ENCODE measurements at regions of chr5 and their contacts with region 1.

Region 1: DNA sequence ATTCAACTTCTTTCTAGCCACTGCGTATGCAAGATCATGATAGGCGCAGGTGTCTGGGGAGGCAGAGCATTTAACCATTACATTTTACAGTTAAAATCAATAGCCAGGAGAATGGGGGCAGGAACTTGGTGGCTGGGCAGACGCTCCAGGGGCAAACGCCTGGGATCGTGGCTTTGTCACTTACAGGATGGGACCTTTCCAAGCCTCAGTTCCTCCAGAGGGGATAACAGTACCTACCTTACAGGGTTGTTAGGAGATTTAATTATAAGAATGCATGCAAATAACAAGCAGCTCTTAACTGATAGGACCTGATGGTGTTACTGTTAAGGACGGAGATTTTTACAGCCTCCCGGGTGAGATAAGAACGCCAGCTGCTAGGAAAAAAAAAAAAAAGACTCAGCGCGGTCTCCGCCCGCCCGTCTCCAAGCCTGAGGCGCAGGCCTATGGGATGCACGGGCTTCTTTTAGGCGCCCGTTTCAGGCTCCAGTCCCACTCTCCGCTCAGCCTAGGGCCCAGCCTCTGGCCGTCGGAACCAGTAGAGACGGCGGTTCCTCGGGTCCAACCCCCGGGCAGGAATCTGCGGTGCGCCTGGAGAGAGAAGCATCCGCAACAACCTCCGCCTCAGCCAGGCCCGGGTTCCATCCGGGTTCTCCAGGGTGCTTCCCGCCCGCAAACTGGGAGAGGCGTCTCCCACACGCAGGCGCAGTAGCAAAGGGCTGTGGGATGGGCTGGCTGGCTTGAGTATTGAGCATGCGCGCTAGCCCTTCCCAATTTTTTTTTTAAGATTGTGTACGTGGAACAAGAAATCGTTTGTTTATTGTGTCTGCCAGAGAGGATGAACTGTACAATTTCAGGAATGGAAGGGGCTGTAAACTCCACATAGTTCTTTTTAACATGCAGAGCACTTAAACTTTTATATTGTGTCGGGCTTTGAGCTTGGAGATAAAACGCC is at the start of gene FAM200C:
- DNase-seq: peak; percentile 74
- H3K4me3 Mint-ChIP-seq: peak within 1 kb of the TSS; percentile 87
- H3K27ac Mint-ChIP-seq: peak within 1 kb of the TSS; percentile 84
- H3K4me1 Mint-ChIP-seq: peaks cover 18% of the 10 kb centered on the region
- H3K27me3 Mint-ChIP-seq: no peaks in the 10 kb centered on the region
- total RNA-seq, gene FAM200C: 0.65 and 0.98 TPM in 2 replicates

Region 2: GRCh38 chr5:160119142-160119904 is 280.4 kb before region 1 on chr5 and contains the start of gene PWWP2A:
- intact Hi-C with region 1: loop called (anchors 2 kb)
- DNase-seq: peak; percentile 96
- H3K4me3 Mint-ChIP-seq: peak within 1 kb of the TSS; percentile 95
- H3K27ac Mint-ChIP-seq: peak within 1 kb of the TSS; percentile 96
- H3K4me1 Mint-ChIP-seq: peaks cover 15% of the 10 kb centered on the region
- H3K27me3 Mint-ChIP-seq: peaks cover 4% of the 10 kb centered on the region
- total RNA-seq, gene PWWP2A: 29.7 and 30.2 TPM in 2 replicates

Region 3: DNA sequence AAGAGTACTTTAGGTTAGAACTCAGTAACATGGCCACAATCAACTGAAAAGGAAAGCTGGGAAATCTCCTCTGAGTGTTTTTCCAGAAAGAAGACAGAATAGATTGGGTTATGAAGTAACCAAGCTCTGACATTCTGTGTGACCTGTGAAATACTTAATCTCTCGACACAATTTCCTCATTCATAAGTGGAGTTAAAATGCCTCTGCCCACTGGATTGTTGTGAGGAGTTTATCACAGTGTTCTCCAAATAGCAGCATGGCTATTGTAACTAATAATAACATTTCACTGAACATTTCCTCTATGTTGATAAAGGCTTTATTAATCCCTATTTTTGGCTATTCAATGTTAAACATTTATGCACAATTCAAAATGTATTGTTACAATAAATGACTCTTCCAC is 835.9 kb after region 1 on chr5:
- intact Hi-C with region 1: no loop called
- DNase-seq: no peak
- H3K4me3 Mint-ChIP-seq: no peak overlapping the region
- H3K27ac Mint-ChIP-seq: no peak overlapping the region
- H3K4me1 Mint-ChIP-seq: no peaks in the 10 kb centered on the region
- H3K27me3 Mint-ChIP-seq: no peaks in the 10 kb centered on the region

Measured in activated T-helper 1 cell treated with anti-CD3 and anti-CD28 coated beads, Interleukin-12 subunit alpha, Interleukin-12 subunit beta, Interleukin-2, Interleukin-4 antibody, amounts not matched to agents 30 ng/mL and 10 ng/mL and 1 ng/mL, durations not matched to agents 14 hours and 24 hours and 36 hours (primary cell).